Esophagus squamous epithelium (tissue), 5 donors: ENCODE measurements at regions of chr14 and their contacts with region 1.

Region 1: GRCh38 chr14:102928412-102929240 is 6.2 kb downstream of the AMN start:
- DNase-seq: peak; percentile 33
- H3K4me3 ChIP-seq: peak overlapping the region; percentile 46 to 68 (median 51)
- H3K27ac ChIP-seq: peak overlapping the region; percentile 79 to 95 (median 92)
- H3K4me1 ChIP-seq: peaks cover 24 to 55% (median 33%) of the 10 kb centered on the region in 3 donors
- H3K27me3 ChIP-seq: peaks cover 0 to 68% (median 9%) of the 10 kb centered on the region in 4 donors
- CTCF ChIP-seq: peak in 1 of 6 experiments; percentile 3
- POLR2A ChIP-seq: peak in 2 of 4 donors; percentile 20 to 67

Region 2: GRCh38 chr14:102694530-102695166 is 234.0 kb before region 1 on chr14:
- intact Hi-C with region 1: loop called (anchors 10 kb)
- DNase-seq: no peak
- H3K4me3 ChIP-seq: no peak overlapping the region
- H3K27ac ChIP-seq: no peak overlapping the region
- H3K4me1 ChIP-seq: peaks cover 0 to 76% (median 8%) of the 10 kb centered on the region in 3 donors
- H3K27me3 ChIP-seq: no peaks in the 10 kb centered on the region
- CTCF ChIP-seq: peak; percentile 56 to 84 (median 69)
- POLR2A ChIP-seq: no peak